Activated CD8-positive, alpha-beta T cell treated with anti-CD3 and anti-CD28 coated beads for 36 hours (primary cell): ENCODE measurements at regions of chr16 and their contacts with region 1.

Region 1: DNA sequence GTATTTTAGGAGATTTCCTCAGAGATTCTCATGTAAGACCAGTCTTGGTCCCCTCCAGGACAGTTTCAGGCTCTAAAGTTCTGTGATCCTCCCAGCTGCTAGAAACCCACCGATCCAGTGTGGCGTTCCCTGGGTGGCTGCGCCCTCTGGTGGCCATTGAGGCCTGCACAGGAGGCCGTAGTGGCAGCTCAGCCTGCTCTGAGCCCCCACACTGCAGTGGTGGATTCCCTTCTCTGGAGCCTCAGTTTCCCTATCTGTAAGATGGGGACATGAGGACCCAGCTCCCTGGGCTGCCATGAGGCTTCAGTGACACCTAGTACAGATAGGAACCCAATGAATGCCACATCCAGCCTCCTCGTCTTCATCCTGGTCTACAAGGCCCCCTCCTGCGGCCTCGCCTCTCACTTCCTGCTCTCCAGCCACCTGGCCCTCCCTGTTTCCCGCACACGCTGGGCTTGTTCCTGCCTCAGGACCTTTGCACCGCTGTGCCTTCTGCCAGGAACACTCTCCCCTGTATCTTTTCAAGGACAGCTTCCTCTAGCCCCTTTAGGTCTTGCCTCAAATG is 16.5 kb downstream of the CCDC102A start:
- DNase-seq: peak; percentile 90
- ATAC-seq: peak; percentile 98
- H3K4me3 Mint-ChIP-seq: no peak overlapping the region
- H3K27ac Mint-ChIP-seq: peak overlapping the region; percentile 47
- H3K4me1 Mint-ChIP-seq: peaks cover 4% of the 10 kb centered on the region
- H3K27me3 Mint-ChIP-seq: no peaks in the 10 kb centered on the region
- CTCF ChIP-seq: peak; percentile 98

Region 2: GRCh38 chr16:57146735-57147134 is 373.1 kb before region 1 on chr16:
- CTCF ChIA-PET with region 1: no interaction called
- POLR2A ChIA-PET with region 1: no interaction called
- intact Hi-C with region 1: no loop called
- DNase-seq: no peak
- ATAC-seq: peak; percentile 35
- H3K4me3 Mint-ChIP-seq: no peak overlapping the region
- H3K27ac Mint-ChIP-seq: no peak overlapping the region
- H3K4me1 Mint-ChIP-seq: peaks cover 28% of the 10 kb centered on the region
- H3K27me3 Mint-ChIP-seq: no peaks in the 10 kb centered on the region
- CTCF ChIP-seq: no peak

Region 3: DNA sequence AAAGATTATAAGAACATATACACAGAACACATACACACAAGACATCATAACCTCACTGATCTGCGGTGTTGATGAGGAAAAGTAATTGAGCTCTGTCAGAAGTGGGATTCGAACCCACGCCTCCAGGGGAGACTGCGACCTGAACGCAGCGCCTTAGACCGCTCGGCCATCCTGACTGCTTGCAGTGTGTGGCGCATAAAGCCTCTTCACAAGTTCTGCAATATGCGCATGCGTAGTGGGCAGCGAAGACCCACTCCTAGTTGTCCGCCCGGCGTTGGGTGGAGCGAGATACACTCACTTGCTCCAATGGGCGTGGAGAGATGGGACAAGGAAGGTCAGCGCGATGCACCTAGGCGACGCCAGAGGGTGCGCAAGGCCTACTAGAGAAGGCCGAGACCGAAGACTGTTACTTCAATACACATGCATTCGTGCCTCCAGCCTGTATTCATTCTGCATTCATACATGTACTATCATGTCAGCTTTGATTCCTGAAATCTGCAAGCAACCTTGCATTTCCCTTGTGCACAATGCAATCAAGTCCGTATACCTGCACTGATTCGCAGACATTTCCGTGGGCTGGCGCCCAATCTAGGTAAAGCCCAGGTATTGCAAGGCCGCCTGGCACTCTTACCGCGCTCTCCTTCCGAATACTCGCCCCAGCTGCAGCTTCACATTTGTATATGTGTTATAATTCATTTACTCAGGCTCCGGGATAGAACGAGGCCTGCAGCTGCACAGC is 219.3 kb before region 1 on chr16:
- CTCF ChIA-PET with region 1: interaction called, 13 read pairs
- POLR2A ChIA-PET with region 1: no interaction called
- intact Hi-C with region 1: loop called (anchors 10 kb)
- DNase-seq: peak; percentile 99
- ATAC-seq: peak; percentile 91
- H3K4me3 Mint-ChIP-seq: no peak overlapping the region
- H3K27ac Mint-ChIP-seq: no peak overlapping the region
- H3K4me1 Mint-ChIP-seq: peaks cover 14% of the 10 kb centered on the region
- H3K27me3 Mint-ChIP-seq: no peaks in the 10 kb centered on the region
- CTCF ChIP-seq: peak; percentile 96

Region 4: GRCh38 chr16:57432989-57433388 is 86.9 kb before region 1 on chr16:
- CTCF ChIA-PET with region 1: interaction called, 12 read pairs
- POLR2A ChIA-PET with region 1: interaction called, 4 read pairs
- intact Hi-C with region 1: no loop called
- DNase-seq: no peak
- ATAC-seq: no peak
- H3K4me3 Mint-ChIP-seq: no peak overlapping the region
- H3K27ac Mint-ChIP-seq: peak overlapping the region; percentile 66
- H3K4me1 Mint-ChIP-seq: peaks cover 29% of the 10 kb centered on the region
- H3K27me3 Mint-ChIP-seq: no peaks in the 10 kb centered on the region
- CTCF ChIP-seq: no peak

Region 5: GRCh38 chr16:57462209-57462977 is 57.5 kb before region 1 on chr16 and contains the start of gene POLR2C:
- CTCF ChIA-PET with region 1: interaction called, 55 read pairs
- POLR2A ChIA-PET with region 1: interaction called, 5 read pairs
- intact Hi-C with region 1: loop called (anchors 5 kb)
- DNase-seq: peak; percentile 95
- ATAC-seq: peak; percentile 98
- H3K4me3 Mint-ChIP-seq: peak within 1 kb of the TSS; percentile 99
- H3K27ac Mint-ChIP-seq: peak within 1 kb of the TSS; percentile 100
- H3K4me1 Mint-ChIP-seq: peaks cover 25% of the 10 kb centered on the region
- H3K27me3 Mint-ChIP-seq: no peaks in the 10 kb centered on the region
- CTCF ChIP-seq: peak; percentile 99
- total RNA-seq, gene POLR2C: 62.4 to 63.0 TPM

Region 6: GRCh38 chr16:57485916-57486857 is 33.7 kb before region 1 on chr16 and contains the start of gene DOK4:
- CTCF ChIA-PET with region 1: interaction called, 60 read pairs
- POLR2A ChIA-PET with region 1: interaction called, 3 read pairs
- intact Hi-C with region 1: no loop called
- DNase-seq: peak; percentile 81
- ATAC-seq: peak; percentile 95
- H3K4me3 Mint-ChIP-seq: peak within 1 kb of the TSS; percentile 76
- H3K27ac Mint-ChIP-seq: peak within 1 kb of the TSS; percentile 79
- H3K4me1 Mint-ChIP-seq: peaks cover 22% of the 10 kb centered on the region
- H3K27me3 Mint-ChIP-seq: no peaks in the 10 kb centered on the region
- CTCF ChIP-seq: no peak
- total RNA-seq, gene DOK4: 4.6 to 5.1 TPM

Region 7: DNA sequence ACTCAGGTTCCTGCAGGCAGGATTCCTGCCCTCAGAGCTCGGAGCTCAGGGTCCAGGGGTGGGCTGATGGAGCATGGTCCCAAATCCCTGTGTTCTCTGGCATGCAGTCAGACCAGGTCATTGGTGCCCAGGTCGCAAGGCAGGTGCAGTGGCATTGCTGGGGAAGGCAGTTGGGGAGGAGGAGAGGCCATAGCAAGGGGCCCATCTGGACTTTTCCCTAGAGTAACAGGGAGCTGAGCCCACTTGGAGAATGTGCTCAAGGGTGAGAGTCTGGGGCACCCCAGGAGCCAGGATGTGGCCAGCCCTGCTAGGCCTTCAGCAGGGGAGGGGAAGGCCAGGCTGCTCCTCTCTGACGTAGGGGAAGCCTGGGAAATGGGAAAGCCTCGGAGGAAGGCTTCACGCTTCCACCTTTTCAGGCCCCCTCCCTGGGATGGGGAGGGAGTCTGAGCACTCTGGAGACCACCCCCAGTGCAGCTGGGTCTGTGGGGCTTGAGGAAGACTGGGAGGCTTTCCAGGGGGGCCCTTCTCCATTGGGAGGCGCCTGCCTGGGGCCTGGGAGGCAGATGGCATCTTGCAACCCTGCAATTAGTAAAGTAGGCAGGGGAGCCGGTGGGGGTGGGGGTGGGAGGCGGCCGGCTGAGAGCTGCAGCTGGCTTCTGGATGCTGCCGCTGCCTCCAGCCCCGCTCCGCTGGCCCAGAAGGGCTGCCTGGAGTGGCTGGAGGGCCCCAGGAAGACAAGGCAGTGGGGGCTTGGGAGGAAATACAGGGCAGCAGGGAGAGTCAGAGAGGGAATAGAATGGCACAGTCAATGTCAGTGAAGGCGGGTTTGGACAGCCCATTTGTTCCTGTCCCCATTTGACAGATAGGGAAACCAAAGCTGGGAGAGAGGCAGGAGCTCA is 12.5 kb before region 1 on chr16:
- CTCF ChIA-PET with region 1: interaction called, 24 read pairs
- POLR2A ChIA-PET with region 1: no interaction called
- intact Hi-C with region 1: no loop called
- DNase-seq: no peak
- ATAC-seq: no peak
- H3K4me3 Mint-ChIP-seq: no peak overlapping the region
- H3K27ac Mint-ChIP-seq: no peak overlapping the region
- H3K4me1 Mint-ChIP-seq: no peaks in the 10 kb centered on the region
- H3K27me3 Mint-ChIP-seq: no peaks in the 10 kb centered on the region
- CTCF ChIP-seq: no peak